ENCODE measurements at regions of chr1 and their contacts with region 1.

Region 1: DNA sequence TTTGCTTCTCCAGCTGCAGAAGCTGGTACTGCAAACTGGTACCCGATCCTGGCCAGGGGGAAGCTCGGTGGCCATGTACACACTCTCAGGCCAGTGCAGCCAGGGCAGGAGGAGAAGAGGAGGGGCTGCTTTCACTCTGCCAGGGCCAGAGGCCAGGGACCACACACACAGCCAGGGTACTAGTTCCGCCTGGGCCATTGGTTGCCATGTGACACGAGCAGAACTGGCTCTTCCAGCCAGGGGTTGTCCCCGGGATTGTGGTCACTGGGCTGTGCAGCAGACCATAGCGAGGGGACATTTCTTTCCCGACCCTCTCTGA is 3.7 kb upstream of the SHISAL2A start:
- DNase-seq: no peak
- ATAC-seq: no peak
- H3K4me3 Mint-ChIP-seq: no peak overlapping the region
- H3K27ac Mint-ChIP-seq: peak overlapping the region; percentile 53
- H3K4me1 Mint-ChIP-seq: peaks cover 72% of the 10 kb centered on the region
- H3K27me3 Mint-ChIP-seq: no peaks in the 10 kb centered on the region
- CTCF ChIP-seq: no peak

Region 2: DNA sequence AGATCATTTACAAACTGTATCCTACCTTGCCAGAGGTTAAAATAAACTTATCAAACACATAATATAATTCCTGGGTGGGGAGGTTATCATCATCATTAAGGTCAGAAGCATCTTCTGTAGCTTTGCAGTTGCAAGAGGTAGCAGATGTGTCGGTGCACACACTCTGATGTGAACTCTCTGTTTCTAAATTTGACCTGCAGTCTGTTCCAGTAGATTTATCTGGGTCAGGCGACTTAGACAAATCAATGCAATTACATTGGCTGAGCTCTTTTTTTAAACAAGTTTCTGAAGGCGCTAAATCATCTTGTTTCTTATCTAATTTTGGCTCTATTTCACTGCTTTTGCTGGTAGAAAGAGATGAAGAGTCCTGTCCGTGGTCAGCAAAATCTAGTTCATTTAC is 154.5 kb before region 1 on chr1:
- CTCF ChIA-PET with region 1: no interaction called
- POLR2A ChIA-PET with region 1: interaction called, 13 read pairs
- intact Hi-C with region 1: no loop called
- DNase-seq: no peak
- ATAC-seq: no peak
- H3K4me3 Mint-ChIP-seq: no peak overlapping the region
- H3K27ac Mint-ChIP-seq: no peak overlapping the region
- H3K4me1 Mint-ChIP-seq: peaks cover 2% of the 10 kb centered on the region
- H3K27me3 Mint-ChIP-seq: no peaks in the 10 kb centered on the region
- CTCF ChIP-seq: no peak

Measured in activated B cell treated with CpG ODN at 0.5 μM for 24 hours (primary cell).